ENCODE measurements at regions of chr6 and their contacts with region 1.

Region 1: GRCh38 chr6:12097791-12098190 is 85.7 kb downstream of the HIVEP1 start:
- DNase-seq: no peak
- ATAC-seq: no peak
- H3K4me3 ChIP-seq: no peak overlapping the region
- H3K4me3 Mint-ChIP-seq: no peak overlapping the region
- H3K27ac ChIP-seq: no peak overlapping the region
- H3K27ac Mint-ChIP-seq: no peak overlapping the region
- H3K4me1 ChIP-seq: peaks cover 0 to 12% of the 10 kb centered on the region in 2 donors
- H3K4me1 Mint-ChIP-seq: peaks cover 15 to 78% (median 64%) of the 10 kb centered on the region in 7 donors
- H3K27me3 ChIP-seq: no peaks in the 10 kb centered on the region
- H3K27me3 Mint-ChIP-seq: no peaks in the 10 kb centered on the region

Region 2: GRCh38 chr6:12081771-12082170 is 16.0 kb before region 1 on chr6:
- CTCF ChIA-PET with region 1: no interaction called
- POLR2A ChIA-PET with region 1: interaction called, 5 read pairs
- intact Hi-C with region 1: loop called in 1 of 2 experiments (anchors 2 kb)
- DNase-seq: no peak
- ATAC-seq: no peak
- H3K4me3 ChIP-seq: no peak overlapping the region
- H3K4me3 Mint-ChIP-seq: peak overlapping the region in 2 of 10 donors; percentile 6 to 27
- H3K27ac ChIP-seq: no peak overlapping the region
- H3K27ac Mint-ChIP-seq: peak overlapping the region in 3 of 9 donors; percentile 1 to 29 (median 23)
- H3K4me1 ChIP-seq: peaks cover 0 to 19% of the 10 kb centered on the region in 2 donors
- H3K4me1 Mint-ChIP-seq: peaks cover 40 to 88% (median 62%) of the 10 kb centered on the region in 7 donors
- H3K27me3 ChIP-seq: no peaks in the 10 kb centered on the region
- H3K27me3 Mint-ChIP-seq: no peaks in the 10 kb centered on the region

Measured in naive thymus-derived CD4-positive, alpha-beta T cell (primary cell).